ENCODE measurements at regions of chr10 and their contacts with region 1.

Region 1: DNA sequence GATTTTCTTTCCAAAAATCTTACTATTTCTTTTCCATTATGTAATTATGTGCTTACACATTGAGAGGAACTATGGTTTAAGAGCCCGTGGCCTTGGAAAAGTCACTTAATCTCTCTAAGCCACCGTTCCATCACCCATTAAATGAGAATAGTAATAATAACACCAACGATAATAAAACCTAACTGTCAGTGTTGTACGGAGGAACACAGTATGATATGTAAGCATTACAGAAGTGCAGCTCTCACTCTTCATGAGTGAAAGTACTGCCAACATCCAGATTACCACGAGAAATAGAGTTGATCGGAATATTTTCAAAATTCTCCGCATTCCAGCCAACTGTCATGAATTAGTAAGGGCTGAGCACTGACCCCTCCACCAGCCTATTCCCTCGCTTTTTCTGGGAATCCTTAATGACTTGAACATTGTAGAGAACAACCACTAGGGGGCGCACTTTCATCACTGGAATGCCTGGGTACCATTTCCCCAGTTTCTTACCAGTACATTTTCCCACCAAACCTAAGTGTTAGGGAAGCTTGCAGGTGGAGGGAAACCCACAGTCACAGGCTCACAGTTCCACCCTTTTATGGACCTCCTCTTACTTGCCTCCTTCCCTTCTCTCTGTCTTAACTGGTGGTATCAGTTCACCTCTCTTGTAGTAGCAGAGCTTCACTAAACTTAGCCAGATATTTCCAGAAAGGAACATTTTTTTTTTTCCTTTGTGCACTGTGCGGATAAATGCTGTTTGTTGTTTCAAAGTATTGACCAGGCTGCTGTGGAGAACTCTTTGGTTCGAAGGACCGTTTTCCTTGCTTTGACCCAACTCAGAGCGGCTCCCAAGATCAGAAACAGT is 27.8 kb downstream of the NKX2-3 start:
- DNase-seq: peak; percentile 48 to 70
- ATAC-seq: peak; percentile 81 to 95; a peak in 5 of 6 replicates
- H3K4me3 ChIP-seq: no peak overlapping the region
- H3K27ac ChIP-seq: no peak overlapping the region
- H3K4me1 ChIP-seq: no peaks in the 10 kb centered on the region
- CTCF ChIP-seq: peak; percentile 89
- EP300 ChIP-seq: no peak
- POLR2A ChIP-seq: no peak
- RAD21 ChIP-seq: peak; percentile 72 to 86

Region 2: DNA sequence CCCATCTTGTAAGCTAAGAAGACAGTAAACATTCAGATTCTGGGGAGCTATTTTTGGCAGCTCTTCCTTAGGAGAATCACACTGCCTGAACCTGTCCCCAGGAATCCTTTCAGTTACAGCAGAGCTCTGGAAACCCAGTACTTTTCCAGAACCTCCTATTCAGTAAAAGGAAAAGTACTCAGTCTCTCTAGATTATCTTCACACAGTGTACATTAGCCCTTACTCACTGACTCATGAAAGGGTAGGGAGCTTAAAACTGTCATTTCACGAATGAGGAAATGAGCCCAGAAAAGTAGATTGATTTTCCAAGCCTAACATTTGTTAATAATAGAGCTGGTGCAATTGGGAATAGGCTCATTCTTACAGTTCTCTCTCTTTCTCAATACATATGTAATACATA is 235.2 kb before region 1 on chr10:
- CTCF ChIA-PET with region 1: no interaction called
- POLR2A ChIA-PET with region 1: no interaction called
- DNase-seq: peak in 1 of 2 experiments; percentile 69
- ATAC-seq: peak in 1 of 2 experiments; percentile 35; a peak in 2 of 6 replicates
- H3K4me3 ChIP-seq: no peak overlapping the region
- H3K27ac ChIP-seq: peak overlapping the region; percentile 50 to 62
- H3K4me1 ChIP-seq: peaks cover 16% of the 10 kb centered on the region
- CTCF ChIP-seq: no peak
- EP300 ChIP-seq: no peak
- POLR2A ChIP-seq: no peak
- RAD21 ChIP-seq: no peak

Region 3: GRCh38 chr10:99450624-99451498 is 109.6 kb before region 1 on chr10:
- CTCF ChIA-PET with region 1: no interaction called
- POLR2A ChIA-PET with region 1: no interaction called
- DNase-seq: no peak
- ATAC-seq: no peak; a peak in 1 of 6 replicates
- H3K4me3 ChIP-seq: no peak overlapping the region
- H3K27ac ChIP-seq: no peak overlapping the region
- H3K4me1 ChIP-seq: no peaks in the 10 kb centered on the region
- CTCF ChIP-seq: no peak
- EP300 ChIP-seq: no peak
- POLR2A ChIP-seq: no peak
- RAD21 ChIP-seq: no peak

Region 4: GRCh38 chr10:99532687-99533495 is 27.6 kb before region 1 on chr10 and contains the start of gene NKX2-3:
- CTCF ChIA-PET with region 1: interaction called, 14 read pairs
- POLR2A ChIA-PET with region 1: no interaction called
- DNase-seq: peak; percentile 75 to 88
- ATAC-seq: peak; percentile 71 to 90
- H3K4me3 ChIP-seq: peak within 1 kb of the TSS; percentile 70
- H3K27ac ChIP-seq: peak within 1 kb of the TSS in 1 of 2 experiments; percentile 64; a peak in 3 of 6 replicates
- H3K4me1 ChIP-seq: 0 out of 3 replicates have a peak, but pooled peaks cover 3% of the 10 kb centered on the region
- CTCF ChIP-seq: no peak
- EP300 ChIP-seq: no peak
- POLR2A ChIP-seq: no peak
- RAD21 ChIP-seq: no peak
- polyA plus RNA-seq, gene NKX2-3: not detected in 2 replicates

Region 5: GRCh38 chr10:99548041-99548530 is 12.4 kb before region 1 on chr10:
- CTCF ChIA-PET with region 1: interaction called, 74 read pairs
- POLR2A ChIA-PET with region 1: no interaction called
- DNase-seq: peak; percentile 65 to 75
- ATAC-seq: peak; percentile 92 to 96
- H3K4me3 ChIP-seq: no peak overlapping the region
- H3K27ac ChIP-seq: no peak overlapping the region
- H3K4me1 ChIP-seq: peaks cover 5% of the 10 kb centered on the region; the same call in 1 of the 3 replicates
- CTCF ChIP-seq: peak; percentile 39
- EP300 ChIP-seq: no peak
- POLR2A ChIP-seq: no peak
- RAD21 ChIP-seq: peak; percentile 45 to 62

Region 6: DNA sequence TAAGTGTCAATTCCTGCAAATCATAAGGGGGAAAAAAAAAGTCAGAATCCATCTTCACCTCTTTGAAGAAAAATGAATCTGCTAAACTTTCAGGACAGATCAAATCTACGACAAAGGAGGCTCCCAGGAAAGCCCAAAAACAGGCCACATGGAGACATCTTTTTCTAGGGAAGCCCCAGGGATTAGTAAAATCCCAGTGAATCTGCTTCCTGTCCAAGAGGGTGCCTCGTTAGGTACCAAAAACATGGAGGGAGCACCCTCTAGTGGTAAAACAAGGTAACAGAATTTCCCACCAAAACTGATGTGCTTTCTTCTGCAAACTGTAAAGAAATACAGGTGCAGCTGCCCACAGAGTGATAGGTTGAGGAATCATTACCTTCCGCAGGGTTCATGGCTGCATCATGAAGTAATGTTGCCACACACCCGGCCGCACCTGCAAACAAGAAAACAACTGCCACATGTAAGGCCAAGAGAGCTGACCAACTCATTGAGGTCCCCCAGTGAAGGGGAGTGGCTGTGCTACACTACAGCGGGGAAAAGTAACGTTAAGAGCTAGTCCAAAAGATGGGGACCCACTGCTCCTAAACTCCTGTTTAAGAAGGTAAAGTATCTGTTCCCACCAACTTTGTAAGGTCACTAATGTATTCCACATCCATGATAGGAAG is 51.8 kb after region 1 on chr10:
- CTCF ChIA-PET with region 1: interaction called, 104 read pairs
- POLR2A ChIA-PET with region 1: no interaction called
- DNase-seq: peak; percentile 68 to 77
- ATAC-seq: peak; percentile 87 to 90
- H3K4me3 ChIP-seq: no peak overlapping the region
- H3K27ac ChIP-seq: no peak overlapping the region
- H3K4me1 ChIP-seq: peaks cover 4% of the 10 kb centered on the region; the same call in 2 of the 3 replicates
- CTCF ChIP-seq: peak; percentile 91
- EP300 ChIP-seq: no peak
- POLR2A ChIP-seq: no peak
- RAD21 ChIP-seq: peak; percentile 88

Region 7: DNA sequence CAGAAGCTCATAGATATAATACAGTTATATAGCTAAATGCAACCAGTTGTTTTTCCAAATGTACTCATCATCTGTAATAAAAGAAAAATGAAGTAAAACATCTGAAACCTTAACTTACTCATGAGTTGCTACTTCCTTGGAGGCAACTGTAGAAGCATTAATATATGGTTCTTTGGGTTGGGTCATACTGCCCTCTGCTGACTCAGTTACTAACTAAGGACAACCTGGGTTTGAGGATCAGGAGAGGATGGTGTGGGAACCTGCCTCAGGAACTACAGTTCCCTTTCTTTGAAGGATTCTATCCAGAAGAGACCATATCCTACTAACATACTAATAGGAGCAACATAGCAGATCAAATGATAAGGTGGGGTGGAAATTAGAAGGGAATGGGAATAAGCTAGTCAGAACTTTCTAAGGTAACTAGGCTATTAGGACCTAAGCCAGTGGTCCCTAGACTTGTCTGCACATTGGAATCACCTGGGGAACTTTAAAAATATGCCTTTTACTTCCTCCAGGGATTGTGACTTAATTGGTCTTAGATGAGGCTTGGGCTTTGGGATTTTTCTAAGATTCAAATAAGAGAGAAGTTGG is 150.7 kb after region 1 on chr10:
- CTCF ChIA-PET with region 1: interaction called, 21 read pairs
- POLR2A ChIA-PET with region 1: no interaction called
- DNase-seq: peak; percentile 16 to 57
- ATAC-seq: peak; percentile 91 to 93
- H3K4me3 ChIP-seq: no peak overlapping the region
- H3K27ac ChIP-seq: no peak overlapping the region
- H3K4me1 ChIP-seq: peaks cover 19% of the 10 kb centered on the region
- CTCF ChIP-seq: peak; percentile 65
- EP300 ChIP-seq: no peak
- POLR2A ChIP-seq: no peak
- RAD21 ChIP-seq: peak; percentile 63 to 75